Activated CD4-positive, alpha-beta memory T cell treated with anti-CD3 and anti-CD28 coated beads, Interleukin-2, amount 10 ng/mL, durations not matched to agents 7 days and 5 days (primary cell): ENCODE measurements at regions of chr16 and their contacts with region 1.

Region 1: GRCh38 chr16:4734063-4734729 is at the starts of genes ANKS3 and DNAAF8:
- DNase-seq: peak; percentile 81
- H3K4me3 Mint-ChIP-seq: peak within 1 kb of the TSS; percentile 78
- H3K27ac Mint-ChIP-seq: peak within 1 kb of the TSS; percentile 78
- H3K4me1 Mint-ChIP-seq: peaks cover 24% of the 10 kb centered on the region
- H3K27me3 Mint-ChIP-seq: no peaks in the 10 kb centered on the region
- total RNA-seq, gene ANKS3: 10.0 to 10.2 TPM
- total RNA-seq, gene DNAAF8: not detected

Region 2: GRCh38 chr16:4649744-4650442 is 84.3 kb before region 1 on chr16:
- CTCF ChIA-PET with region 1: interaction called, 10 read pairs
- POLR2A ChIA-PET with region 1: no interaction called
- DNase-seq: peak; percentile 35
- H3K4me3 Mint-ChIP-seq: no peak overlapping the region
- H3K27ac Mint-ChIP-seq: peak overlapping the region; percentile 31
- H3K4me1 Mint-ChIP-seq: peaks cover 22% of the 10 kb centered on the region
- H3K27me3 Mint-ChIP-seq: no peaks in the 10 kb centered on the region

Region 3: DNA sequence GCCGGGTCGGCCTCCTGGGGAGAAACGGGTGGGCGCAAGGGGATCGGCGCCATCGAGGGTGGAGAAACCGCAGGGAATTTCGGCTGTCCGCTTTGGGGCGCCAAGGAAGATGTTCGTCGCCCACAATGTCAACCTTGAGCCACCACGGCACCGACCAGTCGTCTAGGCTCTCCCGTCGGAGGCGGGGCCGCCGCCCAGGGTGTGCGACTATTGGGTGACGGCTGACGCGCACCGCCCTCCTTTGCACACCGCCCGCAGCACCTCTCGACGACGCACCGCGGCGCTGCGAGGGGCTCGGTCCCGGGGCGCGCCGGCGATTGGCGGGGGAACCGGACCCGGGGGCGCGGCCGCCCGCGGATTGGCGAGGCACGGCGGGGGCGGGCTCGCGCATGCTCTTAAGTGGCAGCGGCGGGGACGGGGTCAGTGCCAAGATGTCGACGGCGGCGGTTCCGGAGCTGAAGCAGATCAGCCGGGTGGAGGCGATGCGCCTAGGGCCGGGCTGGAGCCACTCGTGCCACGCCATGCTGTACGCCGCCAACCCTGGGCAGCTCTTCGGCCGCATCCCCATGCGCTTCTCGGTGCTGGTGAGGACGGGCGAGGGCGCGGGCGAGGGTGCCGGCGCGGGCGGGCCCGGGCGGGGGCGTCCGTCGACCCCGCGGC is 40.8 kb before region 1 on chr16 and contains the start of gene NUDT16L1:
- CTCF ChIA-PET with region 1: interaction called, 3 read pairs
- POLR2A ChIA-PET with region 1: interaction called, 14 read pairs
- DNase-seq: peak; percentile 98
- H3K4me3 Mint-ChIP-seq: peak within 1 kb of the TSS; percentile 79
- H3K27ac Mint-ChIP-seq: peak within 1 kb of the TSS; percentile 78
- H3K4me1 Mint-ChIP-seq: peaks cover 18% of the 10 kb centered on the region
- H3K27me3 Mint-ChIP-seq: no peaks in the 10 kb centered on the region
- total RNA-seq, gene NUDT16L1: 24.2 to 25.5 TPM

Region 4: DNA sequence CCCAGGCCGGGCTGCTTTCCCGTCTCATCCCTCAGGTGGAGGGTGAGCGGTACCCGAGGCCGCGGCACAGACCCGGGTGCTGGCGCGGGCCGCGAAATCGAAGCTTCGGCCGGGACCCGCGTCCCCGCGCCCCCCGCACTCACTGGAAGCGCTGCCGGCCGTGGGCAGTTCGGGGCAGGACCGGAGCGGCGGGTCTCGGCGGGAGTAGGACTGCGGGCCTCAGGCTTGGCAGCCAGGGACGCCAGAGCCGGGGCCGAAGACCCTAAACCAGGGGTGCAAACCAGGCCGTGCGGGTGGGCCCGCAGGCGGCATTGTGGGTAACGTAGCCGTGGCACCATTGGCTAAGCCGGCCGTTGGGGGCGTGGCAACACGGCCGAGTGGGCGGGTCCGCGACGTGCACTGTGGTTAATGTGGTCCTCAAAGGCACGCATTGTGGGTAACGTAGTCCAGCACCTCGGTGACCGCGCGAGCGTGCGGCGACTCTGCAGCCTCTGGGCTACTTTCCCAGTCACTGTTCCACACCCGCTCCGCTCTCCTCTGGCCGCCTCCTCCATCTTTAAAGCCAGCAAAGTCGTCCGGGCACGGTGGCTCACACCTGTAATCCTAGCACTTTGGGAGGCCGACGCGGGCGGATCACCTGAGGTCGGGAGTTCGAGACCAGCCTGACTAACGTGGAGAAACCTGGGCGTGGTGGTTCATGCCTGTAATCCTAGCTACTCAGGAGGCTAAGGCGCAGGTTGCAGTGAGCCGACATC is 32.9 kb after region 1 on chr16 and contains the start of gene ZNF500:
- CTCF ChIA-PET with region 1: interaction called, 12 read pairs
- POLR2A ChIA-PET with region 1: interaction called, 24 read pairs
- DNase-seq: peak; percentile 96
- H3K4me3 Mint-ChIP-seq: peak within 1 kb of the TSS; percentile 89
- H3K27ac Mint-ChIP-seq: peak within 1 kb of the TSS; percentile 92
- H3K4me1 Mint-ChIP-seq: peaks cover 36% of the 10 kb centered on the region
- H3K27me3 Mint-ChIP-seq: no peaks in the 10 kb centered on the region
- total RNA-seq, gene ZNF500: 14.7 to 15.3 TPM

Region 5: DNA sequence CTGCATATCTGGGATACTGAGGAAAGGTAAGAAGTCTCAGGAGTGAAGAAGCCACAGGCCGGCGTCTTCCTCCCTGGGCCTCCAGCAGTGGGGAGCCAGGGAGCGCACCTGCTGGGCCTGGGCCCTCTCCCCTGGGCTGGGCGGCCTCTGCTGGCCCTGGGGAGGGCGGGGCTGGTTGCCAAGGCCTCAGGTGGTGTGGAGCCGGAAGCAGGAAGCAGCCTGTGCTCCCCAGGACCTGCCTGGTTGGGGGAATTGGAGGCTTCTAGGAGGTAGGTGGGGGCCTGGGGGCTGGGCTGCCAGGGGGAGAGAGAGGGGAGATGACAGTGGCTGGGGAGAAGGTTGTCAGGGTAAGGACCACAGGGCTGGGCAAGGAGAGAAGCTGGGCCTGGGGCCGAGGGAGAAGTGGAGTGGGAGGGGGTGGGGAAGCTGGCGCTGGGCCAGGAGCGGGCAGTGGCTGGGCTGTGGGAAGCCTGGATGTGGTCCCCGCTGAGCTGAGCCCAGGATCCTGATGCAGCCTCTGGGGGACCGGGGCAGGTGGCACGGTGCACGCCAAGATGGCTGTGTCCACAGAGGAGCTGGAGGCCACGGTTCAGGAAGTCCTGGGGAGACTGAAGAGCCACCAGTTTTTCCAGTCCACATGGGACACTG is 61.1 kb after region 1 on chr16 and contains the start of gene SMIM22:
- CTCF ChIA-PET with region 1: no interaction called
- POLR2A ChIA-PET with region 1: no interaction called
- DNase-seq: no peak
- H3K4me3 Mint-ChIP-seq: no peak within 1 kb of the TSS
- H3K27ac Mint-ChIP-seq: no peak within 1 kb of the TSS
- H3K4me1 Mint-ChIP-seq: peaks cover 8% of the 10 kb centered on the region
- H3K27me3 Mint-ChIP-seq: no peaks in the 10 kb centered on the region
- total RNA-seq, gene SMIM22: not detected

Region 6: GRCh38 chr16:4846891-4847773 is 112.9 kb after region 1 on chr16 and contains the starts of genes GLYR1 and UBN1:
- CTCF ChIA-PET with region 1: interaction called, 3 read pairs
- POLR2A ChIA-PET with region 1: interaction called, 18 read pairs
- DNase-seq: peak; percentile 100
- H3K4me3 Mint-ChIP-seq: peak within 1 kb of the TSS; percentile 86
- H3K27ac Mint-ChIP-seq: peak within 1 kb of the TSS; percentile 86
- H3K4me1 Mint-ChIP-seq: peaks cover 59% of the 10 kb centered on the region
- H3K27me3 Mint-ChIP-seq: no peaks in the 10 kb centered on the region
- total RNA-seq, gene GLYR1: 80.4 to 85.4 TPM
- total RNA-seq, gene UBN1: 39.2 to 39.6 TPM

Region 7: GRCh38 chr16:5756969-5757368 is 1022.8 kb after region 1 on chr16:
- CTCF ChIA-PET with region 1: no interaction called
- POLR2A ChIA-PET with region 1: no interaction called
- DNase-seq: no peak
- H3K4me3 Mint-ChIP-seq: no peak overlapping the region
- H3K27ac Mint-ChIP-seq: no peak overlapping the region
- H3K4me1 Mint-ChIP-seq: no peaks in the 10 kb centered on the region
- H3K27me3 Mint-ChIP-seq: no peaks in the 10 kb centered on the region